Ovary (tissue), 10 donors: ENCODE measurements at regions of chr5 and their contacts with region 1.

Region 1: GRCh38 chr5:62631909-62632580 is 53.4 kb downstream of the LRRC70 start:
- DNase-seq: no peak
- H3K4me3 ChIP-seq: no peak overlapping the region
- H3K27ac ChIP-seq: no peak overlapping the region
- H3K4me1 ChIP-seq: peaks cover 1% of the 10 kb centered on the region
- H3K27me3 ChIP-seq: no peaks in the 10 kb centered on the region
- CTCF ChIP-seq: no peak
- EP300 ChIP-seq: no peak
- POLR2A ChIP-seq: no peak

Region 2: DNA sequence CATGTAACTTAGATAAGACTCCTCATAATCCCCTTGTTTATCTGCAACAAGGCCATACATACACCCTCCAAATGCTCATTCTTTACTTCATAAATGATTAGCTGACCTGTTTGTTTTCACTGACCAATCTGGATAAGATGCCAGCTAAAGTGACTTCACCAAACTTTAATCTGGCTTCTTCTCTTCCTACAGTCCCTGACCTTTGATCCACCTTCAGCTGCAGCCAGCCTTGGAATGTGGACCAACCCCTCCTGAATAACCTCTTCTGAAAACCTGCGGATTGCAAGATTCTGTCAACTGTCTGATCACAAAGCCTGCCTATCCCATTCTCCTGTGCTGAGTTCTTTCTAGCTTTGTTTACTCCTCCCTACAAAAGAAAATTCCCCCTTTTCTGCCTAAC is 423.4 kb after region 1 on chr5:
- intact Hi-C with region 1: loop called in 1 of 4 experiments (anchors 2 kb)
- DNase-seq: no peak
- H3K4me3 ChIP-seq: no peak overlapping the region
- H3K27ac ChIP-seq: no peak overlapping the region
- H3K4me1 ChIP-seq: peaks cover 8% of the 10 kb centered on the region
- H3K27me3 ChIP-seq: no peaks in the 10 kb centered on the region
- CTCF ChIP-seq: no peak
- EP300 ChIP-seq: no peak
- POLR2A ChIP-seq: no peak